Activated CD4-positive, alpha-beta memory T cell treated with anti-CD3 and anti-CD28 coated beads, Interleukin-2, amount 10 ng/mL, durations not matched to agents 7 days and 5 days (primary cell): ENCODE measurements at regions of chr12 and their contacts with region 1.

Region 1: DNA sequence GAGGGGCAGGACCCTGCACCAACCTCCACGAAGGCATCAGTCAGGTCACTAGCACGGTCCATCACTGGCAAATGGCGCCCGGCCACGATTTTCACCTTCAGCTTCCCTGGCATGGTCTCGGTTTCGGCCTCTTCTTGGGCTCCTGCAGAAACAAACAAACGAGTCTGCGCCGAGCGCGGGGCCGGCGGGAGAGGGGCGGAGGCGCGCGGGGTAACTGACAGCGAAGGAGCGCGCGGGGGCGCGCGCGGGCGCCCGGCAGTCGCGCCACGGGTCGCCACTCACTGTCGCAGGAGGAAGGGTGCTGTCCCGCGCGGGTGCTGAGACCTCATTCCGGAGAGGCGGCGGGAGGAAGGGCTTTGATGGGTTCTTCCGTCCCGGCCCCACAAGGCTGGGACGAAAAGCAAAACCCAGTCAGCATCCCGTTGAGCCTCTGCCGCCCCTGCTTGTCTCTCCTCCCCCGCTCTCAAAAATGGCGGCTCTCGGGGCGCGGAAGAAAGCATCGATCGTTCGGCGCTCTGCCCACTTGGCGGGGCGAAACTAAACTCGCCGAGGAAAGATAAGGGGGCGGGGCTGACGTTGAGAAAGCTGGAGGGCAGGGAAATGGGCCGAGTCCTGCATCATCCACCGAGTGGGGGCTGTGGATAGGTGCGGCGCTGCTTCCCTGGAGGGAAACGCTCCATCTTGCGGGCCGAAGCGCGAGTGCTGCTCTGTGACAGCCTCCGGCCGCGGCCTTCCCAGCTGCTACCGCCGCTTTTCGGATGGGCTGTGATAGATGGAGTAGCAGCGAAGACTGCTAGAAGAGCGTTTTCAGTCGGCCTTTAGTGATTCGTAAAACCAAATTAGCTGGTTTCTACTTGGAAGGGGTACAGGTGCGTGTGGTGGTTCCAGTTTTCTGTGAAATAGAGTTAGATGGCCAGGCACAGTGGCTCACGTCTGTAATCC is at the start of gene C2CD5:
- DNase-seq: peak; percentile 96
- H3K4me3 Mint-ChIP-seq: peak within 1 kb of the TSS; percentile 92
- H3K27ac Mint-ChIP-seq: peak within 1 kb of the TSS; percentile 96
- H3K4me1 Mint-ChIP-seq: peaks cover 40% of the 10 kb centered on the region
- H3K27me3 Mint-ChIP-seq: peaks cover 10% of the 10 kb centered on the region
- total RNA-seq, gene C2CD5: 52.6 to 52.7 TPM

Region 2: DNA sequence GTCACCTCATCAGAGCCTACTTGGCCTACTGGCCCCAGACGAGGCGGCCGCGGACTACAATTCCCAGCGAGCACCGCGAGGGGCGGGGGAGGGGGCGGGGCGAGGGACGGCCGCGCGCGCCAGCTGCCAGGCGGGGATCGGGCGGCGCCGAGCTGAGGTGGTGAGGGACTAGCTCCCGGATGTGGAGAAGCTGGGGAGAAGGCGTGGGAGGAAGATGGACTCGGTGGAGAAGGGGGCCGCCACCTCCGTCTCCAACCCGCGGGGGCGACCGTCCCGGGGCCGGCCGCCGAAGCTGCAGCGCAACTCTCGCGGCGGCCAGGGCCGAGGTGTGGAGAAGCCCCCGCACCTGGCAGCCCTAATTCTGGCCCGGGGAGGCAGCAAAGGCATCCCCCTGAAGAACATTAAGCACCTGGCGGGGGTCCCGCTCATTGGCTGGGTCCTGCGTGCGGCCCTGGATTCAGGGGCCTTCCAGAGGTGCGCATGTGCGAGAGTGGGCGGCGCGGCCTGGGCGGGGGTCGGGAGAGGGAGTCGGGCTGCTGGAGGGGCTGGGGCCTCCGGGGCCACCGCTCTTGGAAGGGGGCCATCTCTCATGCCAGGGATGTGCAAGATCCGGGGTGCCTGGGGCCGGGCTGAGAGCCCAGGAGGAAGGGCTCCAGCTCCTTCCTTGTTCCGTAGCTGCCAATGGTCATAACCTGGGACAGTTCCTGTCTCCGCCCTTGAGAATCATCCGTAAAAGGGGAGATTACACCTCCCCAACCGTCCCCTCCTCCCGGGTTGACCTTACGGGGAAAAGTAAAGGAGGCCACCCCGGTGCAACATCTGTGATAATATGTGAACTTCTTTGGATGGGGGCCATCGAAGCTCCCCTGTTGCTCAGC is 498.0 kb before region 1 on chr12 and contains the start of gene CMAS:
- CTCF ChIA-PET with region 1: no interaction called
- POLR2A ChIA-PET with region 1: interaction called, 11 read pairs
- DNase-seq: peak; percentile 84
- H3K4me3 Mint-ChIP-seq: peak within 1 kb of the TSS; percentile 97
- H3K27ac Mint-ChIP-seq: peak within 1 kb of the TSS; percentile 79
- H3K4me1 Mint-ChIP-seq: peaks cover 31% of the 10 kb centered on the region
- H3K27me3 Mint-ChIP-seq: no peaks in the 10 kb centered on the region
- total RNA-seq, gene CMAS: 37.5 to 39.3 TPM

Region 3: DNA sequence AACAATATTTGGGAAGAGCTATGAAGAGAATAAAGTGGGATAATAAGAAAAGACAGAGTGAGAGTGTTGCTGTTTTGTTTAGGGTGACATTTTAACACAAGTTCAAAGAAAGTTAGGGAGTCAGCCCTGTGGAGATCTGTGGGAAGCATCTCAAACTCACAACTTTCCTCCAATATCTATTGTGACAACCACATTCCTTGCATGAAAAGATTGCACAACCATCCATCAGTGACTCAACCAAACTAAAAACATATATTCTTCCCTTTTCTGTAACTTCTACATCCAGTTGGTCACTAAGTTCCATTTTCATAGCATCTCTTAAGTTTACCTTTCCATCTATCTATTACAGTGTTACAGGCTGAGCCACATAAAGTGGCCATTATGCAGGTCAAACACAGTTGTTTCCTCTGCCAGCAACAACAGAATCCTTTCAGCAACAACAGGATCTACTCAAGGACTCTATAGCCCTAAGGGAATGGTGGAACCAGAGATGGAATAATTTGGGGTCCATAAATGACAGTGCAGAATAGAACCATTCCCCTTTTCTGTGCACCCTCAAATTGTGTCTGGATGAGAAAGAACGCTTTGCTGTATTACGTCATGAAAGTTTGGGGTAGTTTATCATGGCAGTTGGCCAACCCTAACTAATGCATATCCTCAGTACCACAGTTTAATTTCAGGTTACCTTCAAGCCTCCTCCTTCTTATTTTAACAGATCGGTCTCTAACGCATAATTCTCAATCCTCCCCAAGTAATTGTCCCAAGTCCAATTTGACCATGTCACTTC is 328.6 kb before region 1 on chr12:
- CTCF ChIA-PET with region 1: no interaction called
- POLR2A ChIA-PET with region 1: no interaction called
- DNase-seq: no peak
- H3K4me3 Mint-ChIP-seq: no peak overlapping the region
- H3K27ac Mint-ChIP-seq: no peak overlapping the region
- H3K4me1 Mint-ChIP-seq: no peaks in the 10 kb centered on the region
- H3K27me3 Mint-ChIP-seq: no peaks in the 10 kb centered on the region

Region 4: GRCh38 chr12:22529281-22530060 is 14.8 kb before region 1 on chr12:
- CTCF ChIA-PET with region 1: interaction called, 8 read pairs
- POLR2A ChIA-PET with region 1: interaction called, 24 read pairs
- DNase-seq: no peak
- H3K4me3 Mint-ChIP-seq: no peak overlapping the region
- H3K27ac Mint-ChIP-seq: no peak overlapping the region
- H3K4me1 Mint-ChIP-seq: peaks cover 3% of the 10 kb centered on the region
- H3K27me3 Mint-ChIP-seq: no peaks in the 10 kb centered on the region

Region 5: GRCh38 chr12:22598141-22598762 is 53.9 kb after region 1 on chr12:
- CTCF ChIA-PET with region 1: no interaction called
- POLR2A ChIA-PET with region 1: interaction called, 11 read pairs
- DNase-seq: no peak
- H3K4me3 Mint-ChIP-seq: no peak overlapping the region
- H3K27ac Mint-ChIP-seq: no peak overlapping the region
- H3K4me1 Mint-ChIP-seq: peaks cover 15% of the 10 kb centered on the region
- H3K27me3 Mint-ChIP-seq: no peaks in the 10 kb centered on the region

Region 6: DNA sequence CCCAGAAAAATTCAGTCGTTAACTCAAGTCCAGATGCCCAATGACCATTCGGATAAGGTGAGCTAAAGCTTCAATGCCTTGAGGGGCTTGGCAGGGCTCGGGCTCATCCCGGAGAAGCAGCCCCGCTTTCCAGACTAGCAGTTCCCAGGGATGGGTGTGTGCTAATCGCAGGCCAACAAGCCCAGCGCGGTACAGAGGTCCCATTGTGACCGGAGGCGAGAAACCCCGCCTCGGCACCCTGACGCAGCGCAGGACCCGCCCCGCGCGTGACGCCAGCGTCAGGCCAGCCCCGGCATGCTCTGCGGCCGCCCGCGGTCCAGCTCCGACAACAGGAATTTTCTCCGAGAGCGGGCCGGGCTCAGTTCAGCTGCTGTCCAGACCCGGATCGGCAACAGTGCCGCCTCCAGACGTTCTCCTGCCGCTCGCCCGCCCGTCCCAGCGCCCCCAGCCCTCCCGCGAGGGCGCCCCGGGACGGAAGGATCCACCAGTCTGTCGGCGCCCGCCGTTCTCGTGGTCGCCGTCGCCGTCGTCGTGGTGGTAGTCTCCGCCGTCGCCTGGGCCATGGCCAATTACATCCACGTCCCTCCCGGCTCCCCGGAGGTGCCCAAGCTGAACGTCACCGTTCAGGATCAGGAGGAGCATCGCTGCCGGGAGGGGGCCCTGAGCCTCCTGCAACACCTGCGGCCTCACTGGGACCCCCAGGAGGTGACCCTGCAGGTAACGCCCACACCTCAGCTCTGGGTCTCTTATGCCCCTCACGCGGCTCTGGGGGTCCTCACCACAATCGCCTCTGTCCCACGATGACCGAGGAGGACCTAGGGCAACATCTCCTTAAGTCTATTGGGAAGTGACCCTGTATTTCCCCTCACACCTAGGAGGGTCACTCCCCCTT is 80.8 kb after region 1 on chr12 and contains the start of gene ETNK1:
- CTCF ChIA-PET with region 1: interaction called, 9 read pairs
- POLR2A ChIA-PET with region 1: interaction called, 72 read pairs
- DNase-seq: peak; percentile 89
- H3K4me3 Mint-ChIP-seq: peak within 1 kb of the TSS; percentile 100
- H3K27ac Mint-ChIP-seq: peak within 1 kb of the TSS; percentile 92
- H3K4me1 Mint-ChIP-seq: peaks cover 31% of the 10 kb centered on the region
- H3K27me3 Mint-ChIP-seq: peaks cover 9% of the 10 kb centered on the region
- total RNA-seq, gene ETNK1: 72.0 to 84.9 TPM

Region 7: GRCh38 chr12:22687361-22688076 is 143.2 kb after region 1 on chr12:
- CTCF ChIA-PET with region 1: interaction called, 4 read pairs
- POLR2A ChIA-PET with region 1: interaction called, 10 read pairs
- DNase-seq: peak; percentile 28
- H3K4me3 Mint-ChIP-seq: no peak overlapping the region
- H3K27ac Mint-ChIP-seq: peak overlapping the region; percentile 69
- H3K4me1 Mint-ChIP-seq: peaks cover 28% of the 10 kb centered on the region
- H3K27me3 Mint-ChIP-seq: no peaks in the 10 kb centered on the region